ENCODE measurements at regions of chr6 and their contacts with region 1.

Region 1: DNA sequence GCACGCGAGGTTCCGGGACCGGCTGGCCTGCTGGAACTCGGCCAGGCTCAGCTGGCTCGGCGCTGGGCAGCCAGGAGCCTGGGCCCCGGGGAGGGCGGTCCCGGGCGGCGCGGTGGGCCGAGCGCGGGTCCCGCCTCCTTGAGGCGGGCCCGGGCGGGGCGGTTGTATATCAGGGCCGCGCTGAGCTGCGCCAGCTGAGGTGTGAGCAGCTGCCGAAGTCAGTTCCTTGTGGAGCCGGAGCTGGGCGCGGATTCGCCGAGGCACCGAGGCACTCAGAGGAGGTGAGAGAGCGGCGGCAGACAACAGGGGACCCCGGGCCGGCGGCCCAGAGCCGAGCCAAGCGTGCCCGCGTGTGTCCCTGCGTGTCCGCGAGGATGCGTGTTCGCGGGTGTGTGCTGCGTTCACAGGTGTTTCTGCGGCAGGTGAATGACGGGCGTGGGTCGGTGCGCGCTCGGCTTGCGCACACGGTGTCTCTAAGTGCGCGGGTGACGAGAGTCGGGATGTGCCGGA is at the start of gene CDKN1A:
- DNase-seq: peak; percentile 95
- H3K4me3 Mint-ChIP-seq: peak within 1 kb of the TSS; percentile 97
- H3K27ac Mint-ChIP-seq: peak within 1 kb of the TSS; percentile 90
- H3K4me1 Mint-ChIP-seq: peaks cover 59% of the 10 kb centered on the region
- H3K27me3 Mint-ChIP-seq: no peaks in the 10 kb centered on the region
- total RNA-seq, gene CDKN1A: 77.8 and 82.7 TPM in 2 replicates

Region 2: DNA sequence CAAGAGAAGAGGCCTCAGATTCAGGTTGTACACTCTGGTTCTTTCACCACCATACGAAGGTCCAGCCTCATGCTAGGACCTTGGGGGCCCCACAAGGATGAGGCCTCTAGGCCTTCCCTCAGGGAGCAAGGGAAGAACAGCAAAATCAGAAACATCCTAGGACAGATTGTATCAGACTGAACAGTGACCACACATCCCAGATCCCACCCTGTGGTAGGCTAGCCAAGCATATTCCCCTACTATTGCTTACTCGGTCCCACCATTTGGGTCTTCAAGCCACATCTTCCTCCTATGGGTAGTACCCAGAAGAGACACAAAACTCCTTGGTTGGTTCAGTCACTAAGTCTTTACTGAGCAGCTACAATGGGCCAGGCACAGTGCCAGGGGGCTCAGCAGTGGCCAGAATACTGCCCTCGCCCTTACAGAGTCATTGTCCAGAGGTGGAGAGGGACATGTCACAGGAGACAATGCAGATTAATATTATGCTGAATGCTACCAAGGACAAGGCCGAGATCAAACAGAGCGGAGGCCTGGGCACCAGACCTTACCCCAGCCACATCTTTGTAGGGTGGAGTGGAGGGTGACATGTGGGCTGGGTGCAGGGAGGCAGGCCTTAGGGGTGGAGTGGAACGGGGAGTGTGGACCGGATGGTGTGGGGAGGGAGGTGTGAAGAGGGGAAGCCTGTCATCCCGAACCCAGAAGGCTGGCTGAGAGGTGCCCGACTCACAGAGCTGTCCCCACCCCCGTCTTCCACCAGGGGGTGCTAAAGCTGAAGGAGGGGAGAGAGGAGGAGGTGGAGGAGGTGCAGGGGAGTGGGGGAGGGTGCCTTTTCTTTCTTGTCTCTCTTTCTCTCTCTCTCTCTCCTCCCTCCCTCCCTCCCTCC is 555.1 kb before region 1 on chr6:
- intact Hi-C with region 1: loop called (anchors 5 kb)
- DNase-seq: peak; percentile 97
- H3K4me3 Mint-ChIP-seq: peak overlapping the region; percentile 46
- H3K27ac Mint-ChIP-seq: peak overlapping the region; percentile 79
- H3K4me1 Mint-ChIP-seq: peaks cover 72% of the 10 kb centered on the region
- H3K27me3 Mint-ChIP-seq: no peaks in the 10 kb centered on the region

Region 3: GRCh38 chr6:36442671-36443470 is 235.7 kb before region 1 on chr6 and contains the starts of genes KCTD20 and PXT1:
- intact Hi-C with region 1: loop called (anchors 1 kb)
- DNase-seq: peak; percentile 96
- H3K4me3 Mint-ChIP-seq: peak within 1 kb of the TSS; percentile 96
- H3K27ac Mint-ChIP-seq: peak within 1 kb of the TSS; percentile 98
- H3K4me1 Mint-ChIP-seq: peaks cover 28% of the 10 kb centered on the region
- H3K27me3 Mint-ChIP-seq: no peaks in the 10 kb centered on the region
- total RNA-seq, gene KCTD20: 62.2 and 62.4 TPM in 2 replicates
- total RNA-seq, gene PXT1: 0.09 and 0.30 TPM in 2 replicates

Region 4: GRCh38 chr6:36594029-36594815 is 84.4 kb before region 1 on chr6 and contains the start of gene SRSF3:
- intact Hi-C with region 1: loop called (anchors 1 kb)
- DNase-seq: peak; percentile 99
- H3K4me3 Mint-ChIP-seq: peak within 1 kb of the TSS; percentile 92
- H3K27ac Mint-ChIP-seq: peak within 1 kb of the TSS; percentile 98
- H3K4me1 Mint-ChIP-seq: peaks cover 32% of the 10 kb centered on the region
- H3K27me3 Mint-ChIP-seq: no peaks in the 10 kb centered on the region
- total RNA-seq, gene SRSF3: 532 and 572 TPM in 2 replicates

Region 5: DNA sequence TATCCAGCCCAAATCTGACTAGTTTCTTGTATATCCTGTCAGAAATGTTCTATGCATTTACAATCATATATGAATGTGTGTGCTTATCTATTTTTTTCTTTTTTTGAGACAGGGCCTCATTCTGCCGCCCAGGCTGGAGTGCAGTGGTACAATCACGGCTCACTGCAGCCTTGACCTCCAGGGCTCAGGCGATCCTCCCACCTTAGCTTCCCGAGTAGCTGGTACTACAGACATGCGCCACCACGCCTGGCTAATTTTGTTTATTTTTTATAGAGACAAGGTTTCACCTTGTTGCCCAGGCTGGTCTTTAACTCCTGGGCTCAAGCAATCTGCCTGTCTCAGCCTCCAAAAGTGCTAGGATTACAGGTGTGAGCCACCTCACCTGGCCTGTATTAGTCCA is 16.0 kb after region 1 on chr6:
- intact Hi-C with region 1: loop called (anchors 1 kb)
- DNase-seq: no peak
- H3K4me3 Mint-ChIP-seq: no peak overlapping the region
- H3K27ac Mint-ChIP-seq: peak overlapping the region; percentile 5
- H3K4me1 Mint-ChIP-seq: peaks cover 42% of the 10 kb centered on the region
- H3K27me3 Mint-ChIP-seq: no peaks in the 10 kb centered on the region

Region 6: GRCh38 chr6:36759148-36759759 is 80.7 kb after region 1 on chr6:
- intact Hi-C with region 1: loop called (anchors 1 kb)
- DNase-seq: peak; percentile 95
- H3K4me3 Mint-ChIP-seq: no peak overlapping the region
- H3K27ac Mint-ChIP-seq: peak overlapping the region; percentile 30
- H3K4me1 Mint-ChIP-seq: peaks cover 48% of the 10 kb centered on the region
- H3K27me3 Mint-ChIP-seq: no peaks in the 10 kb centered on the region